ENCODE measurements at regions of chr3 and their contacts with region 1.

Region 1: DNA sequence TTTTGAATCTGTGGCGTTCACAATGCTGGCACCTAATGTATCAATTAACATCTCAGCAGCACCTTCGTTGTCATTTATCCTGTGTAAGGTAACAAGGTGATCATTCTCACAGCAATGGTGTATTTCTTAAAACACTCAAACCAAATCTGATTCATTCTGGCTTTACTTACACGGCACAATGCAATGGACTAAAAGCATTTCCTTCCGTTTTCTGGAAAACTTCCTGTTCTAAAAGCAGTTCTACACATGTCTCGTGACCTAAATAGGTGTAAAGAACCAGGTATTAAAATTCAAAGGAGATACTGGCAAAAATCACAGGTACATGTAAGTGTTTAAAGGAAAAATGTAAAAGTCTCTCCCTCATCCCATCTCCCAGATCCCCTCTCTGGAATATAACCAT is 77.8 kb downstream of the BTD start:
- DNase-seq: no peak

Region 2: DNA sequence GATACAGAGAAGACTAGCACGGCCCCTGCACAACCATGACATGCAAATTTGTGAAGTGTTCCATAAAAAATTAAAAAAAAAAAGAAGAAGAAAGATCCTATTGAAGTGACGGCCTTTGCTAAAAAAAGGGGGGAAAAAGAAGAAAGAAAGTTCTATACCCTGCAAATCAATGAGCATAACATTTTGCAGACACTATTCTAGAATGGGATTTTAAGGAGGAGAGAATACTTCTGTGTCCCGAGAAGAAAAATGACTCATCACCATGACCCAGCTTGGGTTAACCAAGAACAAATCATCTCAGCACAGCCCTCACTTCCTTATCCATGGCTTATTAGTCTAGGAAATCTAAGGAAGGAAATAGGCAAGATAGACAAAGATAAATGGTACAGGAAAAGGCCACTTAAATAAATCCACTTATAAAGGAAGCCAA is 339.5 kb before region 1 on chr3:
- intact Hi-C with region 1: no loop called
- DNase-seq: no peak

Region 3: GRCh38 chr3:15707779-15708178 is 28.5 kb after region 1 on chr3:
- intact Hi-C with region 1: loop called in 1 of 2 experiments (anchors 1 kb)
- DNase-seq: no peak

Measured in posterior vena cava (tissue), 2 donors.